Activated T-helper 1 cell treated with anti-CD3 and anti-CD28 coated beads, Interleukin-12 subunit alpha, Interleukin-12 subunit beta, Interleukin-2, Interleukin-4 antibody, amounts not matched to agents 30 ng/mL and 10 ng/mL and 1 ng/mL, durations not matched to agents 14 hours and 24 hours and 36 hours (primary cell): ENCODE measurements at regions of chr16 and their contacts with region 1.

Region 1: DNA sequence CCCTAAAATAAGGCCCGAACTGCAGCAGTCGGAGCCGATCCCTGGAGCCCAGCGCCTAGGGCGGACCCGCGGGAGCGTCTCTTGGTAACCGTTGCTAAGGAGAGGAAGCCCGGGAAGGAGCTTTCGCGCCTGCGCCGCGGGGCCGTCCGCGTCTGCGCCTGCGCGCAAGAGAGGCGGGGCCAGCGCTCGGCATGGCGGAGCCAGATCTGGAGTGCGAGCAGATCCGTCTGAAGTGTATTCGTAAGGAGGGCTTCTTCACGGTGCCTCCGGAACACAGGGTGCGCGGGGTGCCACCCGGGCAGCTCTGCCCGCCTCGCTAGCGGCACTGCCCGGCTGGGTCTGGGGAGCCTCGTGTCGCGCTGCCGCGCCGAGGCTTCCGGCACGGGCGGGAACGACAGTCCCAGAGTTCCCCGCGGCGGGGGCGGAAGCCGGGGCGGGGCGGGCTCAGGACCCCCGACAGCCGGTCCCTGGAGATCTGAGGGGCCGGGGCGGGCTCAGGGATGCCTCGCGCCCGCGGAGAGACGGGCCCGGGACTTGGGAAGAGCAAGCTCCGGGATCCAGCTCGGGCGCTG is at the start of gene CDK10:
- DNase-seq: peak; percentile 91
- H3K4me3 Mint-ChIP-seq: peak within 1 kb of the TSS; percentile 94
- H3K27ac Mint-ChIP-seq: peak within 1 kb of the TSS; percentile 93
- H3K4me1 Mint-ChIP-seq: peaks cover 6% of the 10 kb centered on the region
- H3K27me3 Mint-ChIP-seq: no peaks in the 10 kb centered on the region
- total RNA-seq, gene CDK10: 93.9 and 99.6 TPM in 2 replicates

Region 2: GRCh38 chr16:89623511-89624261 is 62.9 kb before region 1 on chr16:
- intact Hi-C with region 1: no loop called
- DNase-seq: no peak
- H3K4me3 Mint-ChIP-seq: no peak overlapping the region
- H3K27ac Mint-ChIP-seq: no peak overlapping the region
- H3K4me1 Mint-ChIP-seq: no peaks in the 10 kb centered on the region
- H3K27me3 Mint-ChIP-seq: peaks cover 16% of the 10 kb centered on the region

Region 3: GRCh38 chr16:89657442-89658220 is 29.0 kb before region 1 on chr16 and contains the starts of genes CHMP1A and SPATA33:
- intact Hi-C with region 1: loop called (anchors 1 kb)
- DNase-seq: peak; percentile 91
- H3K4me3 Mint-ChIP-seq: peak within 1 kb of the TSS; percentile 93
- H3K27ac Mint-ChIP-seq: peak within 1 kb of the TSS; percentile 84
- H3K4me1 Mint-ChIP-seq: peaks cover 56% of the 10 kb centered on the region
- H3K27me3 Mint-ChIP-seq: no peaks in the 10 kb centered on the region
- total RNA-seq, gene CHMP1A: 85.7 and 87.7 TPM in 2 replicates
- total RNA-seq, gene SPATA33: 15.1 and 16.1 TPM in 2 replicates

Region 4: GRCh38 chr16:89711601-89712273 is 25.1 kb after region 1 on chr16:
- intact Hi-C with region 1: loop called (anchors 1 kb)
- DNase-seq: peak; percentile 57
- H3K4me3 Mint-ChIP-seq: peak overlapping the region; percentile 81
- H3K27ac Mint-ChIP-seq: no peak overlapping the region
- H3K4me1 Mint-ChIP-seq: no peaks in the 10 kb centered on the region
- H3K27me3 Mint-ChIP-seq: no peaks in the 10 kb centered on the region